ENCODE measurements at regions of chr11 and their contacts with region 1.

Region 1: GRCh38 chr11:97815667-97816066 is 1205.1 kb upstream of the CNTN5 start:
- DNase-seq: no peak
- H3K4me3 ChIP-seq: no peak overlapping the region
- H3K4me3 Mint-ChIP-seq: no peak overlapping the region
- H3K27ac Mint-ChIP-seq: no peak overlapping the region
- H3K4me1 ChIP-seq: no peaks in the 10 kb centered on the region
- H3K4me1 Mint-ChIP-seq: no peaks in the 10 kb centered on the region
- H3K27me3 ChIP-seq: no peaks in the 10 kb centered on the region
- H3K27me3 Mint-ChIP-seq: no peaks in the 10 kb centered on the region
- CTCF ChIP-seq: no peak

Region 2: GRCh38 chr11:97557399-97557798 is 258.3 kb before region 1 on chr11:
- CTCF ChIA-PET with region 1: no interaction called
- POLR2A ChIA-PET with region 1: no interaction called
- intact Hi-C with region 1: loop called (anchors 10 kb)
- DNase-seq: no peak
- H3K4me3 ChIP-seq: no peak overlapping the region
- H3K4me3 Mint-ChIP-seq: no peak overlapping the region
- H3K27ac Mint-ChIP-seq: no peak overlapping the region
- H3K4me1 ChIP-seq: no peaks in the 10 kb centered on the region
- H3K4me1 Mint-ChIP-seq: no peaks in the 10 kb centered on the region
- H3K27me3 ChIP-seq: no peaks in the 10 kb centered on the region
- H3K27me3 Mint-ChIP-seq: peaks cover 3% of the 10 kb centered on the region
- CTCF ChIP-seq: peak in 1 of 2 experiments; percentile 19

Measured in Caco-2 (cell line).